Activated naive CD4-positive, alpha-beta T cell treated with anti-CD3 and anti-CD28 coated beads for 36 hours (primary cell): ENCODE measurements at regions of chr3 and their contacts with region 1.

Region 1: DNA sequence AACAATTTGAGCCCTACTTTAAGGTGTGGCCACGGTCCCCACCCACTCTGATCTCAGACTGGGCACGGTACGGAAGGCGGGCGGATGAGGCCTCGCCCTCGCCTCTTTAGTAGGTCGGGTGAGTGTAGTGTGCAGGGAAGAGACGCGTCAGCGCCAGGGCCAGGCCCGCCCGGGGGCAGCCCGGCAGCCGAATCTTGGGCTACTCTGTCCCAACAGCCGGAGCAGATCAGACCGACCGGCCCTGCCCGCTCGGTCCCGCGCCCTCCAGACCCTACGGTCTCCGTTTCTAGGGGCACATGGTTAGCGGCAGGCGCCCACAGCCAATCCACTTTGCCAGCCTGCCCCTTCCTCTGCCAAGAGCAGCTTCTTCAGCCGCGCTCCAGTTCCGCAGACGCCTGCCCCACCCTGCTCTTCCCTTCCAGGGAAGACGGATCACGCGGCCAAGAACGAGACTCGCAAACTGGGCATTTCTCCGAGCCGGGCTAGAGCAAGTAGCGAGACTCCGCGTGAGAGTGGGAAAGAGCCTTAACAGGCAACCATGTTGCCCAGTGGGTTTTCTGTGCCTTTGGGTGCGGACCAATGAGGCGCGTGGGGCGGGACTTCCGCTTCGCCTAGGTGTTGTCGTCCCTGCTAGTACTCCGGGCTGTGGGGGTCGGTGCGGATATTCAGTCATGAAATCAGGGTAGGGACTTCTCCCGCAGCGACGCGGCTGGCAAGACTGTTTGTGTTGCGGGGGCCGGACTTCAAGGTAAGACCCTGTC is at the start of gene RNF13:
- DNase-seq: peak; percentile 96
- H3K4me3 Mint-ChIP-seq: peak within 1 kb of the TSS; percentile 97
- H3K27ac Mint-ChIP-seq: peak within 1 kb of the TSS; percentile 99
- H3K4me1 Mint-ChIP-seq: peaks cover 43% of the 10 kb centered on the region
- H3K27me3 Mint-ChIP-seq: no peaks in the 10 kb centered on the region
- total RNA-seq, gene RNF13: 22.9 to 25.5 TPM

Region 2: GRCh38 chr3:149129326-149130205 is 683.2 kb before region 1 on chr3 and contains the start of gene HPS3:
- CTCF ChIA-PET with region 1: no interaction called
- intact Hi-C with region 1: loop called (anchors 1 kb)
- DNase-seq: peak; percentile 79
- H3K4me3 Mint-ChIP-seq: peak within 1 kb of the TSS; percentile 82
- H3K27ac Mint-ChIP-seq: peak within 1 kb of the TSS; percentile 25
- H3K4me1 Mint-ChIP-seq: peaks cover 29% of the 10 kb centered on the region
- H3K27me3 Mint-ChIP-seq: peaks cover 2% of the 10 kb centered on the region
- total RNA-seq, gene HPS3: 11.5 to 13.5 TPM

Region 3: GRCh38 chr3:149442851-149443544 is 369.8 kb before region 1 on chr3:
- CTCF ChIA-PET with region 1: no interaction called
- intact Hi-C with region 1: no loop called
- DNase-seq: no peak
- H3K4me3 Mint-ChIP-seq: no peak overlapping the region
- H3K27ac Mint-ChIP-seq: no peak overlapping the region
- H3K4me1 Mint-ChIP-seq: no peaks in the 10 kb centered on the region
- H3K27me3 Mint-ChIP-seq: no peaks in the 10 kb centered on the region

Region 4: DNA sequence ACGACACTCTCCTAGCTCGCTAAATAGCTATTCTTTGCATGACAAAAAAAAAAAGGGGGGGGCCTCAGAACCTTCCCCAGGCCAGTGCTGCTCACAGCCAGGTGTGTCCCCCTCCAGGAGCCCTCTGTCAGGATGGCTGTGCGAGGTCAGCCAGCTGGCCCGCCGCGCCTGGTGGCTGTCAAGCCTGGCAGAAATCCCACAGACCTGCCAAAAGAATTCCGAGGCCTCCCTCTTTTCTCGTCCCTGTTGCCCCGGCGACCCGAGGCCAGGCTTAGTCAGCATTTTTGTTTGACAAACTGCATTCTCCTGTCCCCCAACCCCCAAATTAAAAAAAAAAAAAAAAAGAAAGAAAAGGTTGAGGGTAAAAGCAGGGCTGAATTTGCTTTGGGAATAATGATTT is 276.4 kb before region 1 on chr3:
- CTCF ChIA-PET with region 1: interaction called, 16 read pairs
- intact Hi-C with region 1: no loop called
- DNase-seq: no peak
- H3K4me3 Mint-ChIP-seq: no peak overlapping the region
- H3K27ac Mint-ChIP-seq: no peak overlapping the region
- H3K4me1 Mint-ChIP-seq: peaks cover 3% of the 10 kb centered on the region
- H3K27me3 Mint-ChIP-seq: peaks cover 7% of the 10 kb centered on the region

Region 5: GRCh38 chr3:149702691-149703441 is 109.9 kb before region 1 on chr3:
- CTCF ChIA-PET with region 1: no interaction called
- intact Hi-C with region 1: loop called (anchors 2 kb)
- DNase-seq: no peak
- H3K4me3 Mint-ChIP-seq: no peak overlapping the region
- H3K27ac Mint-ChIP-seq: no peak overlapping the region
- H3K4me1 Mint-ChIP-seq: peaks cover 3% of the 10 kb centered on the region
- H3K27me3 Mint-ChIP-seq: no peaks in the 10 kb centered on the region

Region 6: DNA sequence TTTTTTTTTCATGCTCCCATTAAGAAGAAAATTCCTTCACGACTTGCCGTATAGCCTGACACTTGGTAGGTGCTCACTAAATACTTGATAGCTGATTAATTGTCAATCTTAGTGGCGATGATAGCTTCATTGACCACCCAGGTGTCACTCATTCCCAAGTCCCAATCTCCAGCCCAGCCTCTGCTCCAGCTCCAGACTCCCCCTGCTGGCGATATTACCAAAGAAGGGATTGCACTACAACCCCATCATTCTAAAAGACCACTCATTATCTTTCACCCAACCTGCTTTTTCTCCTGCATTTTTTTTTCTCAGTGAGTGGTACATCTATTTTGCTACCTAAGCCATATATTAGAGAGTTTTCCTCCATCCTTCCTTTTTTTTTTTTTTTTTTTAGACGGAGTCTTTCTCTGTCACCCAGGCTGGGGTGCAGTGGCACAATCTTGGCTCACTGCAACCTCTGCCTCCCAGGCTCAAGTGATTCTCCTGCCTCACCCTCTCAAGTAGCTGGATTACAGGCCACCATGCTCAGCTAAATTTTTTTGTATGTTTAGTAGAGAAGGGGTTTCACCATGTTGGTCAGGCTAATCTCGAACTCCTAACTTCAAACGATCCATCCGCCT is 41.0 kb before region 1 on chr3:
- CTCF ChIA-PET with region 1: interaction called, 22 read pairs
- intact Hi-C with region 1: no loop called
- DNase-seq: peak; percentile 56
- H3K4me3 Mint-ChIP-seq: no peak overlapping the region
- H3K27ac Mint-ChIP-seq: no peak overlapping the region
- H3K4me1 Mint-ChIP-seq: no peaks in the 10 kb centered on the region
- H3K27me3 Mint-ChIP-seq: peaks cover 13% of the 10 kb centered on the region

Region 7: GRCh38 chr3:150220799-150221198 is 408.0 kb after region 1 on chr3:
- CTCF ChIA-PET with region 1: no interaction called
- intact Hi-C with region 1: loop called (anchors 5 kb)
- DNase-seq: no peak
- H3K4me3 Mint-ChIP-seq: no peak overlapping the region
- H3K27ac Mint-ChIP-seq: no peak overlapping the region
- H3K4me1 Mint-ChIP-seq: peaks cover 2% of the 10 kb centered on the region
- H3K27me3 Mint-ChIP-seq: peaks cover 23% of the 10 kb centered on the region

Region 8: GRCh38 chr3:150546226-150547044 is 733.6 kb after region 1 on chr3 and contains the starts of genes EIF2A and SERP1:
- CTCF ChIA-PET with region 1: no interaction called
- intact Hi-C with region 1: loop called (anchors 2 kb)
- DNase-seq: peak; percentile 99
- H3K4me3 Mint-ChIP-seq: peak within 1 kb of the TSS; percentile 97
- H3K27ac Mint-ChIP-seq: peak within 1 kb of the TSS; percentile 95
- H3K4me1 Mint-ChIP-seq: peaks cover 69% of the 10 kb centered on the region
- H3K27me3 Mint-ChIP-seq: no peaks in the 10 kb centered on the region
- total RNA-seq, gene EIF2A: 133 to 135 TPM
- total RNA-seq, gene SERP1: 95.9 to 105 TPM